ENCODE measurements at regions of chr1 and their contacts with region 1.

Region 1: DNA sequence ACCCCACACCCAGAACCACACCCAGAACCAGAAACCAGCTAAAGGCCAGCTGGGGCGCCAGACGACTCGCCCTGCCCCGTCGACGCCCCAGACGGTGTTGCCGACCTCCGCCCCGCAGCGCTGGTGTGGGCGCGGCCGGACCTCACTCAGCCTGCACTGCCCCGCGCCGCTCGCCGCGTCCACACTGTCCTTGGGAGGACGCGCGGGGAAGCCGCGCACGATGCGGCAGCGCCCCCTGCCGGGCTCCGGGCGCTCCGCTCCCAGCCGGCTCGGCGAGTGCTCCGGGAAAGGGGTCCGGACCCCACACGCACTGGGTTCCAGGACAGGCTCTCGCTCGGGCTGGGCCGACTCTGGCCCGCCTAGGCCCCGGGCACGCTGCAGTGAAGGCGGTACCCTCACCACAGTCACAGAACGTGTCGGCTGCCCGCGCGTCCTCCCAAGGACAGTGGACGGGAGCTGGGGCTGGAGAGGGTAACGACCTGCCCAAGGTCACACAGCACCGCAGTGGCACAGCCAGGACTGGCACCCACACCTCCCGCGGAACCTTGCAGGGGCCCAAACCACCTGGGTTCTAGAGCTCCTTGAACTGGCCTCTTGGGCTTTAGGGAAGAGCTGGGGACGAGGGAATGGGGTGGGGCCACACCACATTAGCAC is 90.2 kb downstream of the DMRTA2 start:
- DNase-seq: no peak
- ATAC-seq: peak; percentile 97
- H3K4me3 ChIP-seq: peak overlapping the region; percentile 45; the same call in 1 of the 2 replicates
- H3K27ac ChIP-seq: no peak overlapping the region
- H3K4me1 ChIP-seq: no peaks in the 10 kb centered on the region; the same call in 1 of the 2 replicates
- H3K27me3 ChIP-seq: peaks cover 1 to 2% of the 10 kb centered on the region in 2 experiments; a peak in 1 of 4 replicates
- CTCF ChIP-seq: peak; percentile 72 to 80 (median 74)
- EP300 ChIP-seq: no peak
- POLR2A ChIP-seq: no peak
- RAD21 ChIP-seq: peak; percentile 64

Region 2: DNA sequence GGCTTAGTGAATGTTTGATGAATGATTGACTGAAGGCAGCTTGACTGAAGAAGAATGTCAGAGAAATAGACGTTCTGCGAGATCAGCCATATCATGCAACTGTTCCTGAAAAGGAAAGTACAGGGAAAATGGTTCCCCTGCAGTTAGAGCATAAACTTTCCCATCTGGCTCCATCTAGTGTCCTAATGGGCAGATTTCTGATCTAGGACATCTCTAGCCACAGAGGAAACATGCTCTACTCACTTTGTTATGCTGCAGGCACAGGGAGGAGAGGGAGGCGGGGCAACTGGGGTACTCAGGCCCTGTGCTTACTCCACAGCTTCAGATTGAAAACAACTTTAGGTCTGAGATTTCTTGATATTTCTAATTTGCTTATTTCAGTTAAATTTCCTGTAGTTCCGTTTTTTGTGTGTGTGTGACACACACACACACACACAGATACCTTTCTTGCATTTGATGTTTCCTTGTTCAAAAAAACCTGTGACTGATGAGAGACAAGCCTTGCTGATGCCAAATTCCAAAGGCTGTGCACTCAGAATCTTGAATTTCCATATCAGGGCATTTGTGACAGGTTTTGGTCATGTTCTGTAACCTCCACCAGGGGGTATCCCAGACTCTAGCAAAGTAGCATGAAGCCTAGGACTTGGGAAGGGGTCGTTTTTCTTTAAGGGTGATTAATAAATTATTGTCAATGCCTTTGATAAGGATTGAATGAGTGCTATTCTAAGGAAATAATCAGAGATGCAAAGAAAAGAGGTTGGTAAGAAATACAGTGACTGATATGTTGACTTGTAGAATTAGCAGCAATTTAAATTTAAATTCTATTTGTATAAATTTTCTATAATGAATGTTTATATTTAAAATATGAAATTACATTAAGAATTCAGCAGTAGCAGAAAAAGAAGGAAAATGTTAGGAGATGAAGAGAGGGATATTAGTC is 1416.7 kb before region 1 on chr1:
- CTCF ChIA-PET with region 1: no interaction called
- POLR2A ChIA-PET with region 1: no interaction called
- RAD21 ChIA-PET with region 1: no interaction called
- SMC1A ChIA-PET with region 1: no interaction called
- in situ Hi-C with region 1: loop called (anchors 10 kb)
- intact Hi-C with region 1: loop called (anchors 2 kb)
- DNase-seq: no peak
- ATAC-seq: no peak
- H3K4me3 ChIP-seq: no peak overlapping the region
- H3K27ac ChIP-seq: no peak overlapping the region
- H3K4me1 ChIP-seq: no peaks in the 10 kb centered on the region
- H3K27me3 ChIP-seq: no peaks in the 10 kb centered on the region
- CTCF ChIP-seq: peak; percentile 31 to 32 (median 31); a peak in 4 of 6 replicates
- EP300 ChIP-seq: no peak
- POLR2A ChIP-seq: no peak
- RAD21 ChIP-seq: peak; percentile 47

Region 3: DNA sequence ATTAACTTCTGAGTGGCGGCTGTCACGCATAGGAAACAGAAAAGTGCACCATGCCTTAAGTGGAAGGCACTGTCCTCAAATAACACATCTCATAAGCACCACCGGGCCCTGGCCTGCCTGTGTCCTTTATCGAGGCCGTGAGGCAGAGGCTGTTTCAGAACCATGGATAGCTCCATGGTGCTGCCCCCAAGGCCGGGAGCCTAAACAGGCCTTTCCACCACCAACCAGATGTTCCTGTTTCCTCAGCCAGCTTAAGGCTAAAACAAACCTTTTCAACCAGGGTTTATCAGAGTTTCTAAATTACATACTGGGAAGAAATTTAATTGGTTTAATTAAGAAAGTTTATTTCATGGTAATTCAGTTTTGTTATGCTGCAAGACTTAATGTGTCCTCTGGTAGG is 24.2 kb before region 1 on chr1:
- CTCF ChIA-PET with region 1: interaction called, 10 read pairs
- POLR2A ChIA-PET with region 1: no interaction called
- RAD21 ChIA-PET with region 1: no interaction called
- SMC1A ChIA-PET with region 1: no interaction called
- in situ Hi-C with region 1: no loop called
- intact Hi-C with region 1: no loop called
- DNase-seq: no peak
- ATAC-seq: peak; percentile 74
- H3K4me3 ChIP-seq: no peak overlapping the region
- H3K27ac ChIP-seq: no peak overlapping the region
- H3K4me1 ChIP-seq: no peaks in the 10 kb centered on the region
- H3K27me3 ChIP-seq: no peaks in the 10 kb centered on the region
- CTCF ChIP-seq: no peak
- EP300 ChIP-seq: no peak
- POLR2A ChIP-seq: no peak
- RAD21 ChIP-seq: no peak

Region 4: GRCh38 chr1:50343323-50343722 is 10.3 kb after region 1 on chr1:
- CTCF ChIA-PET with region 1: interaction called, 21 read pairs
- POLR2A ChIA-PET with region 1: no interaction called
- RAD21 ChIA-PET with region 1: no interaction called
- SMC1A ChIA-PET with region 1: no interaction called
- in situ Hi-C with region 1: no loop called
- intact Hi-C with region 1: no loop called
- DNase-seq: no peak
- ATAC-seq: no peak
- H3K4me3 ChIP-seq: no peak overlapping the region
- H3K27ac ChIP-seq: no peak overlapping the region
- H3K4me1 ChIP-seq: no peaks in the 10 kb centered on the region
- H3K27me3 ChIP-seq: 0 out of 4 replicates have a peak, but pooled peaks cover 0 to 2% of the 10 kb centered on the region in 2 experiments
- CTCF ChIP-seq: no peak
- EP300 ChIP-seq: no peak
- POLR2A ChIP-seq: no peak
- RAD21 ChIP-seq: no peak

Region 5: DNA sequence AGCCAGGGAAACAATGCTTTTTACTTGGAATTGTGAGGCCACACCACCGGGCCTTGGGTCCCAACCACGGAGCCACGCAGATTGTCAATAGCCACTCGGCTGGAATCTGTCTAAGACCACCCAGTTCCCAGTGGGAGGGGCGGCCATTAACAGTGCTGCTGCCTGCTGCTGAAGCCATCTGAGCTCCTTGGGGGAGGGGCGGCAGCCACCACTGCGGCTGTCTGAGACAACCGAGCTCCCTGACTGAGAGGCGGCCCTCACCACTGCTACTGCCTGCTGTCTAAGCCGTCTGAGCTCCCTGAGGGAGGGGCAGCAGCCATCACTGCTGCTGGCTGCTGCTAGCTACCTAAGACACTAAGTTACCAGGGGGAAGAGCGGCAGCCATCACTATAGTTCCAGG is 25.9 kb after region 1 on chr1:
- CTCF ChIA-PET with region 1: no interaction called
- POLR2A ChIA-PET with region 1: no interaction called
- RAD21 ChIA-PET with region 1: no interaction called
- SMC1A ChIA-PET with region 1: no interaction called
- in situ Hi-C with region 1: no loop called
- intact Hi-C with region 1: no loop called
- DNase-seq: no peak
- ATAC-seq: no peak
- H3K4me3 ChIP-seq: no peak overlapping the region
- H3K27ac ChIP-seq: no peak overlapping the region
- H3K4me1 ChIP-seq: no peaks in the 10 kb centered on the region
- H3K27me3 ChIP-seq: no peaks in the 10 kb centered on the region
- CTCF ChIP-seq: no peak
- EP300 ChIP-seq: no peak
- POLR2A ChIP-seq: no peak
- RAD21 ChIP-seq: no peak

Region 6: DNA sequence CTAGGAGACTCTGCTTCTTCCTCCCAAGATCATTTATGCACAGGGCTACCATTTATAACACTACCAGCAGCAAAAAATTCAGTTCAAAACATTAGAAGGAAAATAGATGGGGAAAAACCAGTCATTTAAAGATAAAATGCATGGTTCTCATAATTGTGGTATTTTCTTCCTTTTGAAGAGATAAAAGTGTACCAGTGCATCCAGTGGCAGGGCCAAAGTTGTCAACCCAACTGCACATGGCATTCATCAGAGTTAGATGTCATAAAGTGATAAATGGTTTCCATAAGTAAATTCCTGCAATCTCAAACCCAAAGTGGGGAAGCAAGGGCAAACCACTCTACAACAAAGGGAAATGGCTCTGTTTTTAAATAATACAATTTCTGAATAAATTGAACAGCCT is 209.3 kb after region 1 on chr1:
- CTCF ChIA-PET with region 1: no interaction called
- POLR2A ChIA-PET with region 1: no interaction called
- RAD21 ChIA-PET with region 1: no interaction called
- SMC1A ChIA-PET with region 1: no interaction called
- in situ Hi-C with region 1: no loop called
- intact Hi-C with region 1: no loop called
- DNase-seq: no peak
- ATAC-seq: no peak
- H3K4me3 ChIP-seq: no peak overlapping the region
- H3K27ac ChIP-seq: no peak overlapping the region
- H3K4me1 ChIP-seq: no peaks in the 10 kb centered on the region
- H3K27me3 ChIP-seq: no peaks in the 10 kb centered on the region
- CTCF ChIP-seq: no peak
- EP300 ChIP-seq: no peak
- POLR2A ChIP-seq: no peak
- RAD21 ChIP-seq: no peak